Mammary epithelial cell (primary cell): ENCODE measurements at regions of chr3 and their contacts with region 1.

Region 1: GRCh38 chr3:104796556-104796955 is 570.2 kb upstream of the ALCAM start:
- DNase-seq: no peak
- H3K4me3 ChIP-seq: no peak overlapping the region
- H3K27ac ChIP-seq: no peak overlapping the region
- H3K4me1 ChIP-seq: no peaks in the 10 kb centered on the region
- H3K27me3 ChIP-seq: peaks cover 2% of the 10 kb centered on the region
- CTCF ChIP-seq: no peak

Region 2: GRCh38 chr3:104673981-104674380 is 122.6 kb before region 1 on chr3:
- CTCF ChIA-PET with region 1: no interaction called
- dilution Hi-C with region 1: no loop called
- in situ Hi-C with region 1: no loop called
- intact Hi-C with region 1: loop called (anchors 5 kb)
- DNase-seq: no peak
- H3K4me3 ChIP-seq: no peak overlapping the region
- H3K27ac ChIP-seq: no peak overlapping the region
- H3K4me1 ChIP-seq: no peaks in the 10 kb centered on the region
- H3K27me3 ChIP-seq: peaks cover 2% of the 10 kb centered on the region
- CTCF ChIP-seq: no peak